Ovary (tissue), 10 donors: ENCODE measurements at regions of chr18 and their contacts with region 1.

Region 1: DNA sequence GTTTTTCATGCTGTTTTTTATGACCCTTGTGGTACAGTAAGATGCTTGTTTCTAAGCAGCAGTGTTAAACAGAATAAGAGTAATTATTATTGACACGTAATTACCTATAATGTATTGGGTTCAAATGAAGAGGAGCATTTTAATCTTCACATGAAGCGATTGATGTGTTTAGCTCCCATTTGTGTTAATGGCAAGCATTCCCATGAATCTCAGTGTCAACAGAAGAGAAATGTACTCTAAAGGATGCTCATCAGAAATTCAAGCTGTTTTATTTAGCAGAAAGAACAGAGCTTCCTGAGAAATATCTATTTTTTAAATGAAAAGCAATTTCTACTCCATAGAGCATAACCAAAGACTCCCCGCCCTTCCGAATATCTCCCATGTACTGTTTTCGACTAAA is 341.3 kb upstream of the LINC00305 start:
- DNase-seq: no peak
- H3K4me3 ChIP-seq: no peak overlapping the region
- H3K27ac ChIP-seq: no peak overlapping the region
- H3K4me1 ChIP-seq: no peaks in the 10 kb centered on the region
- H3K27me3 ChIP-seq: no peaks in the 10 kb centered on the region
- CTCF ChIP-seq: no peak
- EP300 ChIP-seq: no peak
- POLR2A ChIP-seq: no peak

Region 2: GRCh38 chr18:64294967-64295366 is 195.2 kb before region 1 on chr18:
- intact Hi-C with region 1: loop called in 1 of 4 experiments (anchors 10 kb)
- DNase-seq: no peak
- H3K4me3 ChIP-seq: no peak overlapping the region
- H3K27ac ChIP-seq: no peak overlapping the region
- H3K4me1 ChIP-seq: no peaks in the 10 kb centered on the region
- H3K27me3 ChIP-seq: no peaks in the 10 kb centered on the region
- CTCF ChIP-seq: no peak
- EP300 ChIP-seq: no peak
- POLR2A ChIP-seq: no peak